MCF 10A (cell line): ENCODE measurements at regions of chr5 and their contacts with region 1.

Region 1: DNA sequence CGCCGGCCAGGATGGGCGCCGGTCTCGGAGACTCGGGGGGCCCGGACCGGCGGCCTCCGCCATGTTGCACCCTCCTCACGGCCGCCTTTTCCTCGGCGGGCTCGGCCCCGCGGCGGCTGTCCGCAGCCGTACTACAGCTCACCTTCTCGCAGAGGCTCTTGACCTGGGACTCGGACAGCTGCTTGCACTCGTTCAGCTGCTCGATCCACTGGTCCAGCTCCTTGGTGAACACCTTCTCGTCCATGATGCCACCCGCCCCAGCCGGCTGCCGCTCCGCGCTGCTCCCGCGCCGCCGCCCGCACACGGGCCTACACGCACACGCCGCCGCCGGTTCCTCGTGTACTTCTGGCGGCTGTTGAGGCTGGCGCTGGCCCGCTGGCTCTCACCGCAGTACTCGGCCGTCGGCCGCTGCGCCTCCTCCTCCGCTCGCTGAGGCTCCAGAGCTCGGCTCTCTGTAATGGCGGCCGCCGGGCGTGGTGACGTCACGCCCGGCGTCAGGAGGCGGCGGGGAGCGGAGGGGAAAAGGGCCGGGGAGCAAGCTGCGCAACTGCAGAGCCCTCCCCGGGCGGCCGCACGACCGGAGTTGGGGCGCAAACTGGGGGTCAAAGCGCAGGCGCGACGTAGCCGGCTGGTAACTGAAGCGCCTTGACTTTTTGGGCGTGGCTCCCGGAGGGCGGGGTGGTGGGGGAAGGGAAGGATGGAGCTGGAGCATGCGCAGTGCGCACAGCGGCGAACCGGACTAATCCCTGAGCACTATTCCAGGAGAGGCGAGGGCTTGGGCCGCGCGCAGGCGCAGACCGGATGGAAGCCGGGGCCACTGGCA is at the start of gene PPP2CA:
- DNase-seq: peak; percentile 99
- H3K4me3 Mint-ChIP-seq: peak within 1 kb of the TSS; percentile 97
- H3K27ac Mint-ChIP-seq: peak within 1 kb of the TSS; percentile 100
- H3K4me1 Mint-ChIP-seq: peaks cover 34% of the 10 kb centered on the region
- H3K27me3 Mint-ChIP-seq: no peaks in the 10 kb centered on the region
- CTCF ChIP-seq: no peak
- total RNA-seq, gene PPP2CA: 317 and 359 TPM in 2 replicates

Region 2: GRCh38 chr5:134195666-134196065 is 30.2 kb before region 1 on chr5:
- CTCF ChIA-PET with region 1: interaction called, 5 read pairs
- POLR2A ChIA-PET with region 1: interaction called, 21 read pairs
- intact Hi-C with region 1: no loop called
- DNase-seq: no peak
- H3K4me3 Mint-ChIP-seq: no peak overlapping the region
- H3K27ac Mint-ChIP-seq: no peak overlapping the region
- H3K4me1 Mint-ChIP-seq: no peaks in the 10 kb centered on the region
- H3K27me3 Mint-ChIP-seq: no peaks in the 10 kb centered on the region
- CTCF ChIP-seq: no peak

Region 3: GRCh38 chr5:134240421-134240962 is 14.7 kb after region 1 on chr5:
- CTCF ChIA-PET with region 1: interaction called, 14 read pairs
- POLR2A ChIA-PET with region 1: interaction called, 349 read pairs
- intact Hi-C with region 1: no loop called
- DNase-seq: no peak
- H3K4me3 Mint-ChIP-seq: no peak overlapping the region
- H3K27ac Mint-ChIP-seq: no peak overlapping the region
- H3K4me1 Mint-ChIP-seq: peaks cover 7% of the 10 kb centered on the region
- H3K27me3 Mint-ChIP-seq: no peaks in the 10 kb centered on the region
- CTCF ChIP-seq: no peak

Region 4: DNA sequence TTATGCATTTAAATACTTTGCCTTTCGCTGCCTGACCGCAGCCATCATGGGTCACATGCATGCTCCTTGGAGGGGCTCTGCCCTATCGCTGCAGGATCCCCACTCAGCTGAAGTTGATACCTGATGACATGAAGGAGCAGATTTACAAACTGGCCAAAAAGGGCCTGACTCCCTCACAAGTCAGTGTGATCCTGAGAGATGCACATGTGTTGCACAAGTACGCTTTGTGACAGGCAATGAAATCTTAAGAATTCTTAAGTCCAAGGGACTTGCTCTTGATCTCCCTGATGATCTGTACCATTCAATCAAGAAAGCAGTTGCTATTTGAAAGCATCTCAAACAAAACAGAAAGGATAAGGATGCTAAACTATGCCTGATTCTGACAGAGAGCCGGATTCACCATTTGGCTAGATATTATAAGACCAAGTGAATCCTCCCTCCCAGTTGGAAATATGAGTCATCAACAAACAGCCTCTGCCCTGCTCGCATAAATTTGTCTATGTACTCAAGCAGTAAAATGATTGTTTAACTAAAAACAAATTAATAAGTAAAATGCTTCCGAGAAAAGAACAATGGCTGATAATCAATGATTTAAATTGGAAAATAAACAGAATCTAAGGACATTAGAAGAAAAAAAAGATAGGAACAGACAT is 41.7 kb after region 1 on chr5:
- CTCF ChIA-PET with region 1: interaction called, 3 read pairs
- POLR2A ChIA-PET with region 1: interaction called, 26 read pairs
- intact Hi-C with region 1: no loop called
- DNase-seq: peak; percentile 64
- H3K4me3 Mint-ChIP-seq: no peak overlapping the region
- H3K27ac Mint-ChIP-seq: peak overlapping the region; percentile 4
- H3K4me1 Mint-ChIP-seq: peaks cover 8% of the 10 kb centered on the region
- H3K27me3 Mint-ChIP-seq: no peaks in the 10 kb centered on the region
- CTCF ChIP-seq: no peak

Region 5: GRCh38 chr5:134465816-134466240 is 240.0 kb after region 1 on chr5:
- CTCF ChIA-PET with region 1: no interaction called
- POLR2A ChIA-PET with region 1: interaction called, 11 read pairs
- intact Hi-C with region 1: no loop called
- DNase-seq: peak; percentile 97
- H3K4me3 Mint-ChIP-seq: peak overlapping the region; percentile 72
- H3K27ac Mint-ChIP-seq: peak overlapping the region; percentile 44
- H3K4me1 Mint-ChIP-seq: peaks cover 42% of the 10 kb centered on the region
- H3K27me3 Mint-ChIP-seq: no peaks in the 10 kb centered on the region
- CTCF ChIP-seq: no peak